AG04450 (cell line): ENCODE measurements at regions of chr11 and their contacts with region 1.

Region 1: DNA sequence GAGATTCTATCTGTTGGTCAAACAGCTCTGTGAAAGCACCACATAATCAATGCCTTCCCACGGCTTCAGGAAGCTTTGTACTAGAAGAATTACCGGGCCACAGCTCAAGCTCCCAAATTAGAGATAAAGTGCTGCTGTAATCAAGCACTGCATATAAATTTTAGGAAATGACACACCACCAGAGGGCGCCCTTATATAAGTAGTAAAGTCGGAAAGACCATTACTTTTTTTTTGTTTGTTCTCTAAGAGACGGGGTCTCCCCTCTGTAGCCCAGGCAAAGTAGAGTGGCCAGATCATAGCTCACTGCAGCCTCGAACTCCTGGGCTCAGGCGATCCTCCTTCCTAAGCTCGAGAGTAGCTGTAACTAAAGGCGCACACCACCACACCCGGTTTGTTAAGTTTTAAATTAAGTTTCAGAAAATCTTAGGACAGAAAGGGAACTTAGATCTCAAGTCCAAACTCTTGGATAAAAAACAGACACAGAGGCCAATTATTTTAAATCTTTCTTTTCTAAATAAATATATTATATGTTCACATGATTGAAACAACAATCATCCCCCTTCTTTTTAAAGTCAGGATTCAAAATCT is 32.6 kb downstream of the PRCP start:
- DNase-seq: peak; percentile 48
- H3K4me3 ChIP-seq: no peak overlapping the region; the same call in 1 of the 2 replicates
- H3K27ac ChIP-seq: no peak overlapping the region
- H3K27me3 ChIP-seq: no peaks in the 10 kb centered on the region
- CTCF ChIP-seq: peak; percentile 76

Region 2: GRCh38 chr11:82676473-82677094 is 191.0 kb before region 1 on chr11:
- CTCF ChIA-PET with region 1: no interaction called
- POLR2A ChIA-PET with region 1: no interaction called
- DNase-seq: no peak
- H3K4me3 ChIP-seq: no peak overlapping the region
- H3K27ac ChIP-seq: no peak overlapping the region
- H3K27me3 ChIP-seq: no peaks in the 10 kb centered on the region
- CTCF ChIP-seq: peak; percentile 34; the same call in 1 of the 2 replicates

Region 3: GRCh38 chr11:82842019-82842418 is 25.6 kb before region 1 on chr11:
- CTCF ChIA-PET with region 1: interaction called, 11 read pairs
- POLR2A ChIA-PET with region 1: no interaction called
- DNase-seq: no peak
- H3K4me3 ChIP-seq: no peak overlapping the region
- H3K27ac ChIP-seq: no peak overlapping the region
- H3K27me3 ChIP-seq: no peaks in the 10 kb centered on the region
- CTCF ChIP-seq: no peak

Region 4: GRCh38 chr11:82900277-82901164 is 32.9 kb after region 1 on chr11 and contains the start of gene PRCP:
- CTCF ChIA-PET with region 1: interaction called, 46 read pairs
- POLR2A ChIA-PET with region 1: no interaction called
- DNase-seq: peak; percentile 61
- H3K4me3 ChIP-seq: peak within 1 kb of the TSS; percentile 87
- H3K27ac ChIP-seq: peak within 1 kb of the TSS; percentile 74
- H3K27me3 ChIP-seq: no peaks in the 10 kb centered on the region
- CTCF ChIP-seq: 0 out of 2 replicates have a peak, but pooled peaks have one; percentile 1
- polyA plus RNA-seq, gene PRCP: 128 and 157 TPM in 2 replicates

Region 5: GRCh38 chr11:82930229-82930628 is 62.6 kb after region 1 on chr11:
- CTCF ChIA-PET with region 1: interaction called, 14 read pairs
- POLR2A ChIA-PET with region 1: no interaction called
- DNase-seq: no peak
- H3K4me3 ChIP-seq: no peak overlapping the region
- H3K27ac ChIP-seq: no peak overlapping the region
- H3K27me3 ChIP-seq: no peaks in the 10 kb centered on the region
- CTCF ChIP-seq: no peak

Region 6: GRCh38 chr11:83249972-83250593 is 382.5 kb after region 1 on chr11:
- CTCF ChIA-PET with region 1: interaction called, 69 read pairs
- POLR2A ChIA-PET with region 1: no interaction called
- DNase-seq: peak; percentile 29
- H3K4me3 ChIP-seq: no peak overlapping the region
- H3K27ac ChIP-seq: no peak overlapping the region
- H3K27me3 ChIP-seq: no peaks in the 10 kb centered on the region
- CTCF ChIP-seq: peak; percentile 76

Region 7: DNA sequence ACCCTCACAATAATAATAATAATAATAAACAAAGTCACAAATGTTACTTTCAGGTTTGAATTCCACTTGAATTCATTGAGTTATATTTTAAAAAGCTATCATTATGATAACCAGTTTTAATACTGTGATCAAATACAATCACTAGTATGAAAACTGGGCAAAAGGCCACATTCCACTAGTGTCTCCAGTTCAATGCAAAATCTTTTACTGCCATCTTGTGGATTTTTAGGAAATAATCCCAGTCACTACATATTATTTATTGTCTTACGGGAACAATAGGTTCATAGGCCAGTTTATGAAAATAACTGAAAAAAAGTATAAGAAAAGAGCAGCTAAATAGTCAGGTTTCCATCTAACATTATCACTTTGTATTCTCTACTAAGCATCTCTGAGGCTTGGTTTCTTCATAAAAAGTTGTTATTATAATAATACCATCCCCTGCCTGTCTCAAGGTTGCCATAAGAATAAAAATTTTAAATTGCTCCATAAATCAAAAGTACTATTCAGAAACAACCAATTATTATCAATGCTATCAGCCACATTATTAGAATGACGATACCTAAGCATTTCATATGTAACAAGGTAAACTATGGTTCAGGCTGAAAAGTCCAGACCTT is 952.5 kb after region 1 on chr11:
- CTCF ChIA-PET with region 1: interaction called, 27 read pairs
- POLR2A ChIA-PET with region 1: no interaction called
- DNase-seq: peak; percentile 52
- H3K4me3 ChIP-seq: no peak overlapping the region
- H3K27ac ChIP-seq: no peak overlapping the region
- H3K27me3 ChIP-seq: no peaks in the 10 kb centered on the region
- CTCF ChIP-seq: peak; percentile 58